Gastrocnemius medialis (tissue), 4 donors: ENCODE measurements at regions of chr18 and their contacts with region 1.

Region 1: DNA sequence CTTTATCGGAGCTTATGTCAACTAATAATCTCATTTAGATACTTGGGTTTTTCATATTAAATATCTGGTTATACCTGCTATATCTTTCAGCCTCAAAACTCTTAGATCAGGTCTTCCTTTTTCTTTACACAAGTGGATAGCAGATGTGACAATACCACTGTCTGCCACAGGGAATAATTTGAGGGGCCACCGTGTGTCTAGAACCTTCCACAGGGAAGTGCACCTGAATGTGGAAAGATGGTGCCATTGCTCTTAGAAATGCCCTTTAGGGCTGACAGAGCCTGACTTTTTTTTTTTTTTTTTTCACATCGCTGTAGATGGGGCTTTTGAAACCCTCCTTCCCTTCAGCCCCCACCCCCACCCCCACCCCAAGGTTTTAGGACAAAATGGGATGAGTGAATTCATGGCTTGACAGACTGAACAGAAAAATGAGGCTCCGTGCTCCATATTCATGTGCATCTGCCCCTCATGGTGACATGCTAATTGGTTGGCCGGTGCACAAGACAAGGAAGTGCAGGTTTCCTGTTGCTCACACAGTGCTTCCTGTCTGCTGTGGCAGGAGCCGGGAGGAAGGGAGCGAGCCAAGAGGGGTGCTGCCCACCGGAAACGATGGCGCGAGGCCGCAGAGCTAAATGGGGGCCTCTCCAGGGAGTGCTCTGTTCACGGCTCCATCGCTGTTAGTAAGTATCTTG is 246.0 kb downstream of the LDLRAD4 start:
- DNase-seq: peak; percentile 23 to 34
- ATAC-seq: peak; percentile 45 to 46
- H3K4me3 ChIP-seq: peak overlapping the region in 1 of 4 donors; percentile 9
- H3K27ac ChIP-seq: peak overlapping the region in 3 of 4 donors; percentile 12 to 59 (median 39)
- H3K4me1 ChIP-seq: peaks cover 5 to 14% of the 10 kb centered on the region in 2 donors
- H3K27me3 ChIP-seq: no peaks in the 10 kb centered on the region
- CTCF ChIP-seq: no peak
- POLR2A ChIP-seq: no peak

Region 2: DNA sequence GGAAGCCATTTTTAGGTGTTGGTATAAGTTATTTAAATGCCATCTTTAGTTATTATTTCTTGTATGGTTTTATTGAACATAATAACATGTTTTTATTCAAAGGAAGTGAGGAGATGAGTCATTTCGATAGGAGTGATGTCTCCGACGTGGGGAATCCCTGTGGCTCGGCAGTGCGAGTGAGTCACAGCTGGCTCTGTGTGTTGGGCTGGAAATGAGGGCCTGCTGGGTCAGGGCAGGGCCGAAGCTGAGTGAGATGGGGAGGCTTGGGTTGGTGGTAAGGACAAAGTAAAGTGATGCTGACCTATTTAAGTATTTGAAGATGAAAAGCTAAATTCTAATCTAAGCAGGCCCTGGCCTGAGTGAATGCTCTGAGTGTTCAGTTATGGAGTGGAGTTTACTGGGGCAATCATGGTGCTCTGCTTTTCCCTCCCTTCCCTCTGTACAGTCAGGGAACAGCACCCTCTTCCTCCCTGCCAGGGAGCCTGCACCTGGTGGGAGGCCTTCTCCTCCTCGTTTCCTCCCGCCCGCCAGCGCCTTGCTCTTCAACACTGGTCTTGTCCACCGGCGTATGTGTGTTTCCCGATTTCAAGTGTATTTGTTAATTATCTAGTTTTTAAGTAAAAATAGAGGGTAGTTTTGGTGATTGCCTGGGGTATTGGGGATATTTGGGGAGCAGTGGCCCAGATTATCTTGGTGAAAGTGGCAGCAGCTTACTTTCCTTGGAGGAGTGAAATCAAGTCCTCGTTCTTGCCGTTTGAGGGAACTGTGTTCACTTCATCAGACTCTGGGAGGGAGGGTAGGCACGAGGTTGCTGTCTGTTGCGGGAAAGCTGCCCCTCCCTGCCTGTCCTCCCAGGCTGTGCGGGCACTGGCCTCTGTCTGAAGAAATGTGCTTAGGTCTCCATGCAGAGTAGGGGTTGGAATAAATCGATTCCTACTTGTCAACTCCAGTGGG is 89.0 kb before region 1 on chr18:
- in situ Hi-C with region 1: loop called in 1 of 4 experiments (anchors 25 kb)
- intact Hi-C with region 1: no loop called
- DNase-seq: peak; percentile 28 to 38
- ATAC-seq: peak in 1 of 2 donors; percentile 41
- H3K4me3 ChIP-seq: no peak overlapping the region
- H3K27ac ChIP-seq: peak overlapping the region; percentile 14 to 35 (median 22)
- H3K4me1 ChIP-seq: peaks cover 44 to 46% of the 10 kb centered on the region in 2 donors
- H3K27me3 ChIP-seq: no peaks in the 10 kb centered on the region
- CTCF ChIP-seq: no peak
- POLR2A ChIP-seq: no peak